ENCODE measurements at regions of chr15 and their contacts with region 1.

Region 1: GRCh38 chr15:64740311-64741170 is 34.8 kb downstream of the RBPMS2 start:
- DNase-seq: peak; percentile 85
- ATAC-seq: peak; percentile 89

Region 2: GRCh38 chr15:64809649-64810496 is 69.3 kb after region 1 on chr15:
- intact Hi-C with region 1: loop called (anchors 5 kb)
- DNase-seq: peak; percentile 88
- ATAC-seq: peak; percentile 85

Region 3: DNA sequence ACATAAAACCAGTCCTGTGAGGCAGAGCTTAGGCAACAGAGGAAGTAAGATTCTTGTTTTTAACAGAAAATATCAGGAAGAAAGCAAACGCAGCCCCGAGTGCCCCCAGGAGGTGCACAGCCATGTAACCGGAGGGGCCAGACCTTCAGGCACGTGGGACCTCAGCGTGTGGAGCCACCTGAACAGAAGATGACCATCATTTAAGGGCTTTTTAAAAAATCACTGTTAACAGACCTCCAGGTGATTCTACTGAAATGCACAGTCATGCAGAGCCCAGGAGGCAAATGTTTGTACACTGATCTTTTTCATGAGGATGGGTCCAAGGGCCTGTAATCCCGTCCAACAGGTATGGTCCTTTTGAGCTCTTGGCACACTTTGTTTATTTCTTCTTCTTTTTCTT is 210.3 kb after region 1 on chr15:
- intact Hi-C with region 1: no loop called
- DNase-seq: no peak
- ATAC-seq: no peak

Region 4: GRCh38 chr15:65146438-65146837 is 405.9 kb after region 1 on chr15:
- intact Hi-C with region 1: no loop called
- DNase-seq: no peak
- ATAC-seq: no peak

Measured in left ventricle myocardium superior (tissue), 1 donor.